ENCODE measurements at regions of chr2 and their contacts with region 1.

Region 1: DNA sequence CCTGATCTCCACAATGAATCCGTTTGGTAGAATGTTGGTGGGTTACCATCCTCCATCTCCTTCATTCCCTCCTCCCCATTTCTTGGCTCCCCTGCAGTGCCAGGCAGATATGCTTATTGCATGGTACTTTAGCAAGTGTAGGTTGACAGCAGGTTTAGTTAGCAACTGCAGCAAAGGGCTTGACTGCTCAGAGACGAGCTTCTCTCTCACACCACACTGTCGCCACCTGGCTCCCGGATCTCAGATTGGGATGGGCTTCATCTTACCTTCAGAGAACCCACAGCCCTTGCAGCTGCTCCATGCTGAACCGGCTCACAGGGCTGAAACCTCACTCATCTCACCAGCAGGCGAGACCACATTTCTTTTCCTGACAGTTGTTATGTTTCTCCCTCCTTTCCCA is 88.8 kb downstream of the VWA3B start:
- DNase-seq: no peak
- H3K4me3 ChIP-seq: no peak overlapping the region
- H3K27ac ChIP-seq: no peak overlapping the region
- H3K4me1 ChIP-seq: peaks cover 22% of the 10 kb centered on the region
- H3K27me3 ChIP-seq: no peaks in the 10 kb centered on the region
- CTCF ChIP-seq: peak in 1 of 2 donors; percentile 19

Region 2: DNA sequence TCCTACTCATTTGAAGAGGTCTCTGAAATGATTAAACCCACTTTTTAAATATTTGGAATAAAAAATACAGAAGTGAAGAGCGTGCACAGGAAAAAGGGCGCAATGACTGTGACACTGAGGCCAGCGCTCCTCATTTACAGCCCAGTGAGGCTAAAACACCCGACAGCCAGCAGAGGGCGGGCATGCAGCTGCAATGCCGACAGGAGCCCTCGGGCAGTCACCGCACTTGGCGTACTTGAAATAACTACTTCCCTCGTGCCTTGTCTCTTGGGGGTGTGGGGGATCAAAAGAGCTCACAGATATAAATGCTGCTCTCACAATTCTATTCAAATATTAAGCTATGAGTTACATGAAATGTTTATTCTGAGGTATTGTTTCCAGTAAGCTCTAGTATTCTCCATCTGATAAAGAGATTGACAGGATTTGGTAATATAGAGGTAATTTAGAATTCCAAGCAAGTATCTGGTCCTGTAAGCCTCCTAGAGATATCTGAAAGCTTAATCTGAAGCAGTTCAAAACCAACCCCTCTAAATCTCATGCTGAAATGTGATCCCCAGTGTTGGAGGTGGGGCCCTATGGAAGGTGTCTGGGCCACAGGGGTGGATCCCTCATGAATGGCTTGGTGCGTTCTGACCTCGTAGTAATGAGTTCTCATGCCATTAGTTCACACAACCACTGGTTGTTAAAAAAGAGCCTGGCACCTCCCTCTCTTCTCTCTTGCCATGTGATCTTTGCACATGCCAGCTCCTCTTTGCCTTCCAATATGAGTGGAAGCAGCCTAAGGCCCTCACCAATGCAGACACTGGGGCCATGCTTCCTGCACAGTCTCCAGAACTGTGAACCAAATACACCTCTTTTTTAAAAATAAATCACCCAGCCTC is 368.8 kb before region 1 on chr2:
- CTCF ChIA-PET with region 1: no interaction called
- dilution Hi-C with region 1: no loop called
- in situ Hi-C with region 1: loop called in 1 of 2 experiments (anchors 10 kb)
- intact Hi-C with region 1: loop called (anchors 2 kb)
- DNase-seq: peak; percentile 45
- H3K4me3 ChIP-seq: no peak overlapping the region
- H3K27ac ChIP-seq: no peak overlapping the region
- H3K4me1 ChIP-seq: peaks cover 4% of the 10 kb centered on the region
- H3K27me3 ChIP-seq: no peaks in the 10 kb centered on the region
- CTCF ChIP-seq: peak; percentile 87 to 96

Region 3: GRCh38 chr2:98050070-98050469 is 125.7 kb before region 1 on chr2:
- CTCF ChIA-PET with region 1: no interaction called
- dilution Hi-C with region 1: no loop called
- in situ Hi-C with region 1: no loop called
- intact Hi-C with region 1: loop called (anchors 10 kb)
- DNase-seq: peak; percentile 57
- H3K4me3 ChIP-seq: no peak overlapping the region
- H3K27ac ChIP-seq: no peak overlapping the region
- H3K4me1 ChIP-seq: peaks cover 5% of the 10 kb centered on the region
- H3K27me3 ChIP-seq: no peaks in the 10 kb centered on the region
- CTCF ChIP-seq: no peak

Region 4: GRCh38 chr2:98086491-98087446 is 89.0 kb before region 1 on chr2 and contains the start of gene VWA3B:
- CTCF ChIA-PET with region 1: no interaction called
- dilution Hi-C with region 1: no loop called
- in situ Hi-C with region 1: no loop called
- intact Hi-C with region 1: loop called (anchors 2 kb)
- DNase-seq: peak; percentile 78
- H3K4me3 ChIP-seq: peak within 1 kb of the TSS; percentile 60 to 87 (median 73)
- H3K27ac ChIP-seq: peak within 1 kb of the TSS; percentile 91
- H3K4me1 ChIP-seq: peaks cover 10% of the 10 kb centered on the region
- H3K27me3 ChIP-seq: no peaks in the 10 kb centered on the region
- CTCF ChIP-seq: no peak
- total RNA-seq, gene VWA3B: 0.66 TPM in 1 of 2 donors, not detected in the other

Region 5: GRCh38 chr2:98127229-98127989 is 48.4 kb before region 1 on chr2:
- CTCF ChIA-PET with region 1: no interaction called
- dilution Hi-C with region 1: no loop called
- in situ Hi-C with region 1: no loop called
- intact Hi-C with region 1: loop called (anchors 5 kb)
- DNase-seq: peak; percentile 79
- H3K4me3 ChIP-seq: no peak overlapping the region
- H3K27ac ChIP-seq: no peak overlapping the region
- H3K4me1 ChIP-seq: peaks cover 15% of the 10 kb centered on the region
- H3K27me3 ChIP-seq: no peaks in the 10 kb centered on the region
- CTCF ChIP-seq: no peak

Region 6: GRCh38 chr2:98140210-98140609 is 35.6 kb before region 1 on chr2:
- CTCF ChIA-PET with region 1: no interaction called
- dilution Hi-C with region 1: no loop called
- in situ Hi-C with region 1: no loop called
- intact Hi-C with region 1: loop called (anchors 5 kb)
- DNase-seq: no peak
- H3K4me3 ChIP-seq: peak overlapping the region in 1 of 3 experiments; percentile 23
- H3K27ac ChIP-seq: no peak overlapping the region
- H3K4me1 ChIP-seq: peaks cover 5% of the 10 kb centered on the region
- H3K27me3 ChIP-seq: no peaks in the 10 kb centered on the region
- CTCF ChIP-seq: no peak

Region 7: DNA sequence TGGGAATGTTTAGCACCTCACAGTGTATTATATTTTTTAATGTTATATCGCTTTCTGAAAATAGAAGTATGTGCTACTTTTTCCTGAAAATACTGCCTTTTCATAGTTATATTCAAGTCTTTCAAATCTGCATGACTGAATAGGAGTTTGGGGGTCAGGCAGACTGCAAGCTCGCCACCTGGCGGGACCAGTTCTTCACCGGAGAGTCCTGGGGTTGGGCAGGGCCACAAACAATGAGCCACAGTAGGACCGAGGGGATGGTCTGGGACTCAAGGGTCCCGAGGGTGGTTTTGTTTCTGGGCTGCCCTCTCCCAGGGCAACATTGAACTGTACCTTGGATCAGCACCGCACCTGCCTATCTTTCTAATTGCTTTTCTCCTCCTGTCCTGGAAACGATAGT is 18.3 kb before region 1 on chr2:
- CTCF ChIA-PET with region 1: no interaction called
- dilution Hi-C with region 1: no loop called
- in situ Hi-C with region 1: no loop called
- intact Hi-C with region 1: loop called (anchors 1 kb)
- DNase-seq: no peak
- H3K4me3 ChIP-seq: no peak overlapping the region
- H3K27ac ChIP-seq: no peak overlapping the region
- H3K4me1 ChIP-seq: peaks cover 16% of the 10 kb centered on the region
- H3K27me3 ChIP-seq: no peaks in the 10 kb centered on the region
- CTCF ChIP-seq: no peak